ENCODE measurements at regions of chr12 and their contacts with region 1.

Region 1: GRCh38 chr12:4526923-4527546 is 11.7 kb upstream of the RAD51AP1 start:
- DNase-seq: no peak
- H3K4me3 ChIP-seq: no peak overlapping the region
- H3K27ac ChIP-seq: no peak overlapping the region
- H3K4me1 ChIP-seq: no peaks in the 10 kb centered on the region
- H3K27me3 ChIP-seq: no peaks in the 10 kb centered on the region
- CTCF ChIP-seq: peak; percentile 71

Region 2: DNA sequence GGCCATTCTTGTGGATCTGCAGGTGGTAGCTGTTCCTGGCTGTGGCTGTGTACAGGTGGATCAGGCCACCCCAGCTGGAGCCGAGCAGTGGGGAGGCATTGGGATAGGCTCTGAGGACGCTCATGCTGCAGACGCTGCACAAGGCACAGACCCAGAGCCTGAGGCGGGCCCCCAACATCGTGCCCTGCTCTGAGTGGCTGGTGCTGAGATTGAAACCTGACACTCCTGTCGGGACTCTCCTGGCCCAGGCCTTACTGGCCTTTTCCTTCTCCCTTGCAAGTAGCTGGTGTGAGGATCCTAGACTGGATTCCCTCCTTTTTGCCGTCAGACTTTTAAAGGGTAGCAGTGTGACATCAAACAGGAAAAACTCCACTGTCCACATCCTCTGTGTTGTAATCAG is 147.6 kb before region 1 on chr12 and contains the start of gene FGF23:
- intact Hi-C with region 1: no loop called
- DNase-seq: no peak
- H3K4me3 ChIP-seq: no peak within 1 kb of the TSS
- H3K27ac ChIP-seq: no peak within 1 kb of the TSS
- H3K4me1 ChIP-seq: no peaks in the 10 kb centered on the region
- H3K27me3 ChIP-seq: peaks cover 58% of the 10 kb centered on the region
- CTCF ChIP-seq: no peak
- total RNA-seq, gene FGF23: not detected

Region 3: DNA sequence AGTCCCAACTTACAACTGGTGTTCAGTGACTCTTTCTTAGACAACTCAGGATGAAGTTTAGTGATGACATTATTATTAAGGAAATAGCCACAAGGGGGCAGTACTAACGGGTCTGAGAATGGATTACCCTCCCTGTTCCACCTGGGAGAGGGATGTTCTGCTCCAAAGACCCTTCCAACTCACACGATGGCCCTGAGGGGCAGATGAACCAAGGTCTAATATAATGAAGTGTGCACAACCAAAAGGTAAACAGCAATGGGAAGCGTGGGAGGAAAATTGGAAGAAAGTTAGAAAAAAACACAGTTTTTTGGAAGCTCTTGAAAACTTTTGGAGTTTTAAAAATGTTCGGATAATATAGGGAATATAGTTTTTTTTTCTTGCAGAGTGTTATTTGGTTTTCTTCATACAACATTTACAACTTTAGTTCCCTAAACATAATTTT is 105.4 kb before region 1 on chr12:
- intact Hi-C with region 1: loop called (anchors 5 kb)
- DNase-seq: no peak
- H3K4me3 ChIP-seq: no peak overlapping the region
- H3K27ac ChIP-seq: no peak overlapping the region
- H3K4me1 ChIP-seq: no peaks in the 10 kb centered on the region
- H3K27me3 ChIP-seq: peaks cover 35% of the 10 kb centered on the region
- CTCF ChIP-seq: peak; percentile 71

Region 4: GRCh38 chr12:4441355-4442335 is 85.4 kb before region 1 on chr12:
- intact Hi-C with region 1: no loop called
- DNase-seq: no peak
- H3K4me3 ChIP-seq: no peak overlapping the region
- H3K27ac ChIP-seq: no peak overlapping the region
- H3K4me1 ChIP-seq: peaks cover 22% of the 10 kb centered on the region
- H3K27me3 ChIP-seq: peaks cover 52% of the 10 kb centered on the region
- CTCF ChIP-seq: no peak

Region 5: GRCh38 chr12:5083955-5084849 is 557.2 kb after region 1 on chr12:
- intact Hi-C with region 1: no loop called
- DNase-seq: no peak
- H3K4me3 ChIP-seq: no peak overlapping the region
- H3K27ac ChIP-seq: no peak overlapping the region
- H3K4me1 ChIP-seq: peaks cover 7% of the 10 kb centered on the region
- H3K27me3 ChIP-seq: peaks cover 16% of the 10 kb centered on the region
- CTCF ChIP-seq: peak; percentile 84

Measured in left ventricle myocardium inferior (tissue), 1 donor.